ENCODE measurements at regions of chr4 and their contacts with region 1.

Region 1: GRCh38 chr4:163895378-163896005 is 401.0 kb downstream of the TMA16 start:
- DNase-seq: peak; percentile 48 to 75 (median 60)
- H3K4me3 ChIP-seq: no peak overlapping the region
- H3K4me3 Mint-ChIP-seq: peak overlapping the region in 5 of 8 donors; percentile 0 to 74 (median 61)
- H3K27ac ChIP-seq: no peak overlapping the region
- H3K27ac Mint-ChIP-seq: peak overlapping the region in 6 of 7 donors; percentile 26 to 65 (median 48)
- H3K4me1 ChIP-seq: peaks cover 23% of the 10 kb centered on the region
- H3K4me1 Mint-ChIP-seq: peaks cover 10 to 29% (median 24%) of the 10 kb centered on the region in 4 donors
- H3K27me3 ChIP-seq: no peaks in the 10 kb centered on the region
- H3K27me3 Mint-ChIP-seq: peaks cover 0 to 1% of the 10 kb centered on the region in 2 donors

Region 2: GRCh38 chr4:163673848-163674697 is 221.4 kb before region 1 on chr4:
- CTCF ChIA-PET with region 1: no interaction called
- POLR2A ChIA-PET with region 1: no interaction called
- intact Hi-C with region 1: loop called (anchors 5 kb)
- DNase-seq: no peak
- H3K4me3 ChIP-seq: no peak overlapping the region
- H3K4me3 Mint-ChIP-seq: no peak overlapping the region
- H3K27ac ChIP-seq: no peak overlapping the region
- H3K27ac Mint-ChIP-seq: no peak overlapping the region
- H3K4me1 ChIP-seq: peaks cover 5% of the 10 kb centered on the region
- H3K4me1 Mint-ChIP-seq: peaks cover 10 to 31% (median 15%) of the 10 kb centered on the region in 4 donors
- H3K27me3 ChIP-seq: no peaks in the 10 kb centered on the region
- H3K27me3 Mint-ChIP-seq: no peaks in the 10 kb centered on the region

Measured in CD4-positive, alpha-beta memory T cell (primary cell).